ENCODE measurements at regions of chr15 and their contacts with region 1.

Region 1: DNA sequence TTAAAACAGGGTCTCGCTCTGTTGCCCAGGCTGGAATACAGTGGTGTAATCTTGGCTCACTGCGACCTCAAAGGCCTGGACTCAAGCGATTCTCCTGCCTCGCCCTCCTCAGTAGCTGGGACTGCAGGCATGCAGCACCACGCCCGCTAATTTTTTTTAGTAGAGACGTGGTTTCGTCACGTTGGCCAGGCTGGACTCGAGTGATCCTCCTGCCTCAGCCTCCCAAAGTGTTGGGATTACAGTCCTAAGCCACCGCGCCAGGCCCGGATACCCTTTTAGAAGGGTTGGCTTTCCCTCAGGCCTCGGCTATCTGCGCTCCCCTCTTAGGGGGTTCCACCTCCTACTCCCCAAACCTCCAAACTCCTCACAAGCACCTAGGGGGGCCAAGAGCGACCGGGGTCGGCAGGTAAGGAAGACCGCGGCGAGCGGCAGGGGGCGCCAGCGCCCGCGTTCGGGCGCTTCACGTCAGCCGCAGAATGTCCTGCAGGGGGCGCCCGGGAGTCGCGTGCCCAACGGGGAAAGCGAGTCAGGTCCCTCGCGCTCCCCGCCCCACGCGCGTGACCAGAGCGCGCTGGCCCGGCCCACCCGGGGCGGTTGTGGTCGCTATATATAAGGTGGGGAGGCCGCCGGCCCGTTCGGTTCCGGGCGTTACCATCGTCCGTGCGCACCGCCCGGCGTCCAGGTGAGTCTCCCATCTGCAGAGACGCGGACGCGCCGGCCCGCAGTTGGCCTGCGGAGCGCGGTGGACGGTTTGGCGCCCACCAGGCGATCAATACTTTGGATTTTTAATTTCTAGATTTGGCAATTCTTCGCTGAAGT is 51.8 kb upstream of the GATM start:
- DNase-seq: peak; percentile 89
- ATAC-seq: peak; percentile 90
- H3K4me3 ChIP-seq: peak overlapping the region in 4 of 5 experiments; percentile 27 to 55 (median 51)
- H3K4me3 Mint-ChIP-seq: peak overlapping the region; percentile 67
- H3K27ac ChIP-seq: no peak overlapping the region
- H3K27ac Mint-ChIP-seq: no peak overlapping the region
- H3K4me1 ChIP-seq: peaks cover 4 to 8% of the 10 kb centered on the region in 2 donors
- H3K4me1 Mint-ChIP-seq: peaks cover 2% of the 10 kb centered on the region
- H3K27me3 ChIP-seq: peaks cover 0 to 10% (median 1%) of the 10 kb centered on the region in 4 experiments
- H3K27me3 Mint-ChIP-seq: peaks cover 6% of the 10 kb centered on the region
- CTCF ChIP-seq: peak; percentile 100

Region 2: GRCh38 chr15:45442500-45443135 is 12.4 kb after region 1 on chr15:
- CTCF ChIA-PET with region 1: interaction called, 15 read pairs
- POLR2A ChIA-PET with region 1: no interaction called
- intact Hi-C with region 1: no loop called
- DNase-seq: no peak
- ATAC-seq: no peak
- H3K4me3 ChIP-seq: no peak overlapping the region
- H3K4me3 Mint-ChIP-seq: no peak overlapping the region
- H3K27ac ChIP-seq: no peak overlapping the region
- H3K27ac Mint-ChIP-seq: no peak overlapping the region
- H3K4me1 ChIP-seq: no peaks in the 10 kb centered on the region
- H3K4me1 Mint-ChIP-seq: no peaks in the 10 kb centered on the region
- H3K27me3 ChIP-seq: peaks cover 0 to 6% (median 0%) of the 10 kb centered on the region in 4 experiments
- H3K27me3 Mint-ChIP-seq: peaks cover 4% of the 10 kb centered on the region
- CTCF ChIP-seq: no peak

Measured in B cell (primary cell).